OCI-LY7 (cell line): ENCODE measurements at regions of chr1 and their contacts with region 1.

Region 1: GRCh38 chr1:244835276-244836134 is at the start of gene COX20:
- DNase-seq: peak; percentile 94
- H3K4me3 ChIP-seq: peak within 1 kb of the TSS; percentile 88
- H3K27ac ChIP-seq: peak within 1 kb of the TSS; percentile 94
- H3K4me1 ChIP-seq: peaks cover 78% of the 10 kb centered on the region
- CTCF ChIP-seq: no peak
- total RNA-seq, gene COX20: 12.7 and 12.9 TPM in 2 replicates

Region 2: DNA sequence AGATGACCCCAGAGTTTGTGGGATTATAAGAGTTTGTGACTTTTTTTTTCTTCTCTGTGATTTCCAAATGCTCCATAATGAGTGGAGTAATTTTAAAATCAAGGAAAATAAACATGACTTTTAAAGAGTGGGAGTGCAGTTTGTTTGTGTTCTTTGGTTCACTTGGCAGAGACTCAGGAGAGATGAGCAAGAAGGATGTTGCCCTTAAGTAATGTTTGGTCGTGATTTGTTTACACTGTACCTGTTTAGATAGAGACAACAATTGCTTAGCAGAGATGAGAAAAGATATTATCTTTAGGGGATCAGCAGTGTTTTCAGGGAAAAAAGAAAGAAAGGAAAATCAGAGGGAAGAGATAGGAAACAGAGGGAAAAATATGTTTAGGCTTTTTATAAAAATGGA is 554.6 kb before region 1 on chr1:
- CTCF ChIA-PET with region 1: no interaction called
- POLR2A ChIA-PET with region 1: no interaction called
- intact Hi-C with region 1: no loop called
- DNase-seq: no peak
- H3K4me3 ChIP-seq: no peak overlapping the region
- H3K27ac ChIP-seq: no peak overlapping the region
- H3K4me1 ChIP-seq: no peaks in the 10 kb centered on the region
- CTCF ChIP-seq: no peak

Region 3: DNA sequence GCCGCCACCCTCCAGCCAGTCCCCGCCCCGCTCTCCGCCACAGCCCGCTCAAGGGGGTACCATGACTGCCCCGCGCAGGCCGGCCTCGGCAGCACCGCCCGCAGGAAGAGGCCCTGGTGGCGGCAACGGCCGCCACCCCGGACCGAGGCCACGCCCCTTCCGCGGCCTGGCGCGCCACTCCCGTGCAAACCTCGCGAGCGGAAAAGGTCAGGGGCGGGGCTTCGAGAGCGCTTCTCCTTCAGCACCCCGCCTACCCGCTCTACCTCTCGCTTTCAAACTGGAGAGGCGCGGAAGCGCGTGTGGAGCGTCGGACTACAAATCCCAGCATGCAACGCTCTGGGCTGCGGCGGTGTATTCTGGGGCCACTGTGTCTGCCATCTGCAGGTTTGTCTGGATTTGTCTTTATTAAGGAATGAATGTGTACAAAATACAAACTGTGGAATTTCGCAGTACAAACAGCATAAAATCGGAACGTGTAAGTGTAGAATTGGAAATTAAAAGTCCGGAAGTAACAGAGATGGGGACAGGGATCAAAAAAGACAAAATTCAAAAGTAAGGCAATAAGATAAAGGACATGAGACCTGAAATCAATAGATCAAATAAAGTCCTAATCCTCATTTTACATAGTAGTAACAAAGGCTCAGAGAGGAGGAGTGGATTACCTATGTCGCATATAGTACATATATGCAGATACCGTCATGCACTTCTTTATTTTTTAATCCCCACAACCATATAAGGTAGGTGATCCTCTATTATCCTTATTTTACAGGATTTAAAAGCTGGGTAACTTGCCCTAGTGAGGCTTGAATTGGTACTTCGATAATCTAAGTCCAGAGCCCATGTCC is 383.3 kb before region 1 on chr1:
- CTCF ChIA-PET with region 1: no interaction called
- POLR2A ChIA-PET with region 1: no interaction called
- intact Hi-C with region 1: loop called (anchors 2 kb)
- DNase-seq: peak; percentile 100
- H3K4me3 ChIP-seq: peak overlapping the region; percentile 98
- H3K27ac ChIP-seq: peak overlapping the region; percentile 85
- H3K4me1 ChIP-seq: peaks cover 32% of the 10 kb centered on the region
- CTCF ChIP-seq: peak; percentile 71

Region 4: GRCh38 chr1:244801246-244801645 is 34.3 kb before region 1 on chr1:
- CTCF ChIA-PET with region 1: interaction called, 7 read pairs
- POLR2A ChIA-PET with region 1: interaction called, 5 read pairs
- intact Hi-C with region 1: loop called (anchors 1 kb)
- DNase-seq: peak; percentile 90
- H3K4me3 ChIP-seq: peak overlapping the region; percentile 44
- H3K27ac ChIP-seq: no peak overlapping the region
- H3K4me1 ChIP-seq: peaks cover 10% of the 10 kb centered on the region
- CTCF ChIP-seq: peak; percentile 95

Region 5: GRCh38 chr1:244918421-244919319 is 83.2 kb after region 1 on chr1:
- CTCF ChIA-PET with region 1: no interaction called
- POLR2A ChIA-PET with region 1: interaction called, 8 read pairs
- intact Hi-C with region 1: loop called (anchors 1 kb)
- DNase-seq: peak; percentile 73
- H3K4me3 ChIP-seq: peak overlapping the region; percentile 62
- H3K27ac ChIP-seq: peak overlapping the region; percentile 89
- H3K4me1 ChIP-seq: peaks cover 52% of the 10 kb centered on the region
- CTCF ChIP-seq: peak; percentile 33; the same call in 1 of the 2 replicates

Region 6: GRCh38 chr1:245045087-245045881 is 209.8 kb after region 1 on chr1:
- CTCF ChIA-PET with region 1: interaction called, 3 read pairs
- POLR2A ChIA-PET with region 1: interaction called, 10 read pairs
- intact Hi-C with region 1: loop called (anchors 1 kb)
- DNase-seq: no peak
- H3K4me3 ChIP-seq: no peak overlapping the region
- H3K27ac ChIP-seq: no peak overlapping the region
- H3K4me1 ChIP-seq: peaks cover 8% of the 10 kb centered on the region
- CTCF ChIP-seq: no peak